Activated CD4-positive, alpha-beta T cell treated with anti-CD3 and anti-CD28 coated beads, Interleukin-2, amount 10 ng/mL, durations not matched to agents 7 days and 5 days (primary cell): ENCODE measurements at regions of chr17 and their contacts with region 1.

Region 1: GRCh38 chr17:1186923-1187771 is 7.4 kb upstream of the ABR start:
- DNase-seq: peak; percentile 72
- H3K4me3 Mint-ChIP-seq: no peak overlapping the region
- H3K27ac Mint-ChIP-seq: no peak overlapping the region
- H3K4me1 Mint-ChIP-seq: peaks cover 8% of the 10 kb centered on the region
- H3K27me3 Mint-ChIP-seq: peaks cover 5% of the 10 kb centered on the region

Region 2: GRCh38 chr17:823501-823902 is 363.6 kb before region 1 on chr17:
- CTCF ChIA-PET with region 1: no interaction called
- POLR2A ChIA-PET with region 1: no interaction called
- DNase-seq: no peak
- H3K4me3 Mint-ChIP-seq: no peak overlapping the region
- H3K27ac Mint-ChIP-seq: no peak overlapping the region
- H3K4me1 Mint-ChIP-seq: no peaks in the 10 kb centered on the region
- H3K27me3 Mint-ChIP-seq: no peaks in the 10 kb centered on the region

Region 3: GRCh38 chr17:1147661-1148060 is 39.5 kb before region 1 on chr17:
- CTCF ChIA-PET with region 1: no interaction called
- POLR2A ChIA-PET with region 1: no interaction called
- DNase-seq: no peak
- H3K4me3 Mint-ChIP-seq: no peak overlapping the region
- H3K27ac Mint-ChIP-seq: peak overlapping the region; percentile 60
- H3K4me1 Mint-ChIP-seq: no peaks in the 10 kb centered on the region
- H3K27me3 Mint-ChIP-seq: no peaks in the 10 kb centered on the region

Region 4: DNA sequence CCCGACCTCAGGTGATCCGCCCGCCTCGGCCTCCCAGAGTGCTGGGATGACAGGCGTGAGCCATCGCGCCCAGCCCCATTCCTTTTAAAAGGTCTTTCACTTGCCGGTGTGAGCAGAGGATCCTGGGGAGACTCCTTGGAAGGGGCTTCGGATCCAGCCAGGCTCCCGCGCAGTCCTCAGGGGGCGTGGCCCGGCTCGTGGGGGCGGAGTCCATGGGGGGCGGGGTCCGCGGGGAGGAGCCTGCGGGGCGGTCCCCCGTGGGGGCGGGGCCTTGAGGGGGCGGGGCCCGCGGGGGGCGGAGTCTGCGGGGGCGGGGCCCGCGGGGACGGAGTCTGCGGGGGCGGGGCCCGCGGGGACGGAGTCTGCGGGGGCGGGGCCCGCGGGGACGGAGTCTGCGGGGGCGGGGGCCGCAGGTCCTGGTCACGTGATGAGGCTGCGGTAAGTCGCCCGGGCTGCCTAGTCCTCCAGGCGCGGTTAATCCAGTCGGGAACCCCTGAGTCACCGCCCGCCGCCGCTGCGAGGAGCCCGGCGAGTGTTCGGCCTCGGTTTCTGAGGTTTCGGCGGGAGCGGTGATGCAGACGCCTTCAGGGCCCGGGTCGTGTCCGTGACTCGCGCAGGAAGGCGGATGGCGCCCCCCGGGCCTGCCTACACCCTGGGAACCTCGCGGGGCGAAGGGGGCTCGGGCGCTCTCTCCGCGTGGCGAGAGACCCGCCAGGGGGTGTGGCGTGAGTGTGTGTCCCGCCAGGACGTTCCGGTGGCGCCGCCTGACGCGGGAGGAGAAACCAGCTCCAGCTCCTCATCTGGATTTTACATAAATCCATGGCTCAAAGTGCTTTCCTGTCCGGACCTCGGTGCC is 16.2 kb after region 1 on chr17:
- CTCF ChIA-PET with region 1: interaction called, 14 read pairs
- POLR2A ChIA-PET with region 1: no interaction called
- DNase-seq: peak; percentile 41
- H3K4me3 Mint-ChIP-seq: no peak overlapping the region
- H3K27ac Mint-ChIP-seq: no peak overlapping the region
- H3K4me1 Mint-ChIP-seq: peaks cover 31% of the 10 kb centered on the region
- H3K27me3 Mint-ChIP-seq: peaks cover 5% of the 10 kb centered on the region

Region 5: DNA sequence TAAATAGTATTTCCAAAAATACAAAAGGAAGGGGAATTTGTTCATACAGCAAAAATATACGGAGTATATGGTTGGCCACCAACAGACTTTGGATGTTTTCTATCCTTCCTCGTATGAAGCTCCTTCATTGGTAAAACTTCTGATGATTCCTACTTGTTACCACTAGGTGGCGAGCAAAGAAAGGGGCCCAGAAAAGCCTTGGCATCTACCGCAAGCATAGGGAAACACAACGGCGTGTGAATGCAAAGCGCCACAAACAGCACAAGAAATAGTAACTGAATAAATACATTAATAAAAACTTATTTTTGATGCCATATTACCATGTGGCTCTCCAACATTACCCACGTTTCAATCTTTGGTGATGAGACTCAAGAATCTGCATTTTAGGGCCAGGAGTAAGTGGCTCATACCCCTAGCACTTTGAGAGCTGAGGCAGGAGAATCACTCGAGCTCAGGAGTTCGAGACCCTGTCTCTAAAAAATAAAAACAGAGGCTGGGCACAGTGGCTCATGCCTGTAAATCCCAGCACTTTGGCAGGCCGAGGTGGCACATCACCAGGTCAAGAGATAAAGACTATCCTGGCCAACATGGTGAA is 178.4 kb after region 1 on chr17:
- CTCF ChIA-PET with region 1: no interaction called
- POLR2A ChIA-PET with region 1: no interaction called
- DNase-seq: peak; percentile 76
- H3K4me3 Mint-ChIP-seq: no peak overlapping the region
- H3K27ac Mint-ChIP-seq: peak overlapping the region; percentile 36
- H3K4me1 Mint-ChIP-seq: peaks cover 64% of the 10 kb centered on the region
- H3K27me3 Mint-ChIP-seq: no peaks in the 10 kb centered on the region